Adrenal gland (tissue), 19 donors: ENCODE measurements at regions of chr19 and their contacts with region 1.

Region 1: GRCh38 chr19:49631014-49631588 is 8.8 kb downstream of the RRAS start:
- DNase-seq: peak in 2 of 7 donors; percentile 35 to 51
- H3K4me3 ChIP-seq: no peak overlapping the region
- H3K27ac ChIP-seq: peak overlapping the region in 1 of 5 donors; percentile 42
- H3K4me1 ChIP-seq: peaks cover 0 to 6% of the 10 kb centered on the region in 2 donors
- H3K27me3 ChIP-seq: no peaks in the 10 kb centered on the region
- CTCF ChIP-seq: no peak
- POLR2A ChIP-seq: no peak

Region 2: DNA sequence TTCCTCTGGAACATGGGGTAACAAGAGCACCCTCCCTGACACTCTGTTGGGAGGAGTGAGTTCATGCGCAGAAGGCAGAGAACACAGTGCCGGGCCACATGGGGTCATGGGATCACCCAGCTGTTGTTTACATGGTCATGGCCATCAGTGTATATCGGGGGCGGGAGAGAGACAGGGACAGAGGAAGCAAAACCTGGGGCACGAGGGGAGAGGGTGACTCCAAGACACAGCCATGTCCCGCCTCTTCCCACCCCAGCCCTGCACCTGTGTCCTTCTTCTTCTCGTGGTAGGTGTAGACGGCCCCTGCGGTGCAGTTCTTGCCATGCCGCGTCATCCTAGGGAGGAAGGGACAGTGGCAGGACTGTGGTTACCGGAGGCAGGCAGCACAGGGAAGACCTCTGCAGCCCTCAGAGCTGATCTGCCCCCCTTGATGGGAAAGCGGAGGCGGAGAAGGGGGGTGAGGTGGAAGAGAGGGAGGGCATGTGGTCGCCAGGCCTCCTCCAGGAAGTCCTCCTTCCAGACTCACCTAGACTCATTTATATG is 70.7 kb before region 1 on chr19:
- intact Hi-C with region 1: no loop called
- DNase-seq: peak in 1 of 7 donors; percentile 38
- H3K4me3 ChIP-seq: no peak overlapping the region
- H3K27ac ChIP-seq: peak overlapping the region in 1 of 5 donors; percentile 14
- H3K4me1 ChIP-seq: peaks cover 18 to 32% of the 10 kb centered on the region in 2 donors
- H3K27me3 ChIP-seq: no peaks in the 10 kb centered on the region
- CTCF ChIP-seq: no peak
- POLR2A ChIP-seq: no peak

Region 3: DNA sequence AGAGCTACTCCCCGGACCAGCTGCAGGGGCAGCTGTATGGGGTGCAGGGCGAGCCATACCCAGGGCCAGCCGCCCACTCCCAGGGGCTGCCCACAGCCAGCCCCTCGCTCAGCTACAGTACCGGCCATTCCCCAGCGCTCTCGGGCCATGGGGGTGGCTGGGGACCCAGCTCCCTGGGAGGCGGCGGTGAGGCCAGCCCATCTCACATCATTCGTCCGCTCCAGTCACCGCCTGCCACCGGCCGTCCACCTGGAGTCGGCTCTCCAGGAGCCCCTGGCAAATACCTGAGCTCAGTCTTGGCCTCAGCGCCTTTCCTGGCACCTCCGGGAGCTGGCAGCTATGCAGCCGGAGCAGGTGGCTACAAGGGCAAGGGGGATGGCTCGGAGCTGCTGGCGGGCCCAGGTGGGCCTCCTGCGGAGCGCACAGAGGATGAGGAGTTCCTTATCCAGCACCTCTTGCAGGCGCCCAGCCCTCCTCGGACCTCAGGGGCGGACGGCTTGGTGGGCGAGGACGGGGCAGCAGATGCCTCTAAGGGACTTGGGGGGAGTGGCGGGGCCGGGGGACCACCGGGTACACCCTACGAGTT is 35.2 kb before region 1 on chr19:
- intact Hi-C with region 1: loop called in 1 of 2 experiments (anchors 5 kb)
- DNase-seq: peak in 1 of 7 donors; percentile 29
- H3K4me3 ChIP-seq: no peak overlapping the region
- H3K27ac ChIP-seq: no peak overlapping the region
- H3K4me1 ChIP-seq: peaks cover 9 to 18% of the 10 kb centered on the region in 2 donors
- H3K27me3 ChIP-seq: no peaks in the 10 kb centered on the region
- CTCF ChIP-seq: no peak
- POLR2A ChIP-seq: no peak